ENCODE measurements at regions of chr2 and their contacts with region 1.

Region 1: DNA sequence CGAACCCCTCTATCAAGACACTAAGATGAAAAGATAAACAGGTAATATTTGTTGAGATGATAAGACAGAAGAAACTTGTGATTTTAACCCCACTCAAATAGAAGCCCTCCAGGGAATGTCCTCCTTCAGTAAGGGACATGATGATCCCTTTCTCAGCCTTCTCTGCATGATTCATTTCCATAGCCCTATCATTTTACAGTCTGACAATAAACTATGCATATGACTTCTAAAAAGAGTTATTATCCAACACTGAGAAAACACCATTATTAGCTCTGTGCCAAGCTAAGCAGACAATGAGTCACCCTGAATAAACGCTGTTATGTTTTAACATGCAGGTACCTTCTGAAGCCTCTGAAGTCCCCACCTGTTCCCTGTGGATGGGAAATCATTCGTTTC is 54.7 kb downstream of the DTNB start:
- DNase-seq: peak in 1 of 2 experiments; percentile 94
- H3K4me3 ChIP-seq: no peak overlapping the region
- H3K27ac ChIP-seq: peak overlapping the region; percentile 62
- H3K4me1 ChIP-seq: peaks cover 25% of the 10 kb centered on the region
- H3K27me3 ChIP-seq: no peaks in the 10 kb centered on the region
- CTCF ChIP-seq: no peak

Region 2: GRCh38 chr2:25597881-25598280 is 20.8 kb before region 1 on chr2:
- CTCF ChIA-PET with region 1: no interaction called
- POLR2A ChIA-PET with region 1: no interaction called
- intact Hi-C with region 1: no loop called
- DNase-seq: no peak
- H3K4me3 ChIP-seq: no peak overlapping the region
- H3K27ac ChIP-seq: no peak overlapping the region
- H3K4me1 ChIP-seq: no peaks in the 10 kb centered on the region
- H3K27me3 ChIP-seq: no peaks in the 10 kb centered on the region
- CTCF ChIP-seq: no peak

Region 3: GRCh38 chr2:25664183-25664964 is 45.7 kb after region 1 on chr2:
- CTCF ChIA-PET with region 1: interaction called, 4 read pairs
- POLR2A ChIA-PET with region 1: interaction called, 3 read pairs
- intact Hi-C with region 1: loop called (anchors 1 kb)
- DNase-seq: peak; percentile 63 to 84
- H3K4me3 ChIP-seq: peak overlapping the region; percentile 32
- H3K27ac ChIP-seq: peak overlapping the region; percentile 70
- H3K4me1 ChIP-seq: peaks cover 37% of the 10 kb centered on the region
- H3K27me3 ChIP-seq: no peaks in the 10 kb centered on the region
- CTCF ChIP-seq: peak; percentile 78

Region 4: GRCh38 chr2:25735835-25736234 is 117.2 kb after region 1 on chr2:
- CTCF ChIA-PET with region 1: no interaction called
- POLR2A ChIA-PET with region 1: interaction called, 22 read pairs
- intact Hi-C with region 1: no loop called
- DNase-seq: no peak
- H3K4me3 ChIP-seq: no peak overlapping the region
- H3K27ac ChIP-seq: no peak overlapping the region
- H3K4me1 ChIP-seq: no peaks in the 10 kb centered on the region
- H3K27me3 ChIP-seq: no peaks in the 10 kb centered on the region
- CTCF ChIP-seq: no peak

Measured in PC-9 (cell line).